Panc1 (cell line): ENCODE measurements at regions of chr14 and their contacts with region 1.

Region 1: GRCh38 chr14:76432827-76433752 is 57.2 kb downstream of the ESRRB start:
- DNase-seq: no peak
- ATAC-seq: no peak
- H3K4me3 ChIP-seq: no peak overlapping the region
- H3K27ac ChIP-seq: no peak overlapping the region
- H3K4me1 ChIP-seq: no peaks in the 10 kb centered on the region
- H3K27me3 ChIP-seq: no peaks in the 10 kb centered on the region; the same call in 1 of the 2 replicates
- CTCF ChIP-seq: no peak

Region 2: DNA sequence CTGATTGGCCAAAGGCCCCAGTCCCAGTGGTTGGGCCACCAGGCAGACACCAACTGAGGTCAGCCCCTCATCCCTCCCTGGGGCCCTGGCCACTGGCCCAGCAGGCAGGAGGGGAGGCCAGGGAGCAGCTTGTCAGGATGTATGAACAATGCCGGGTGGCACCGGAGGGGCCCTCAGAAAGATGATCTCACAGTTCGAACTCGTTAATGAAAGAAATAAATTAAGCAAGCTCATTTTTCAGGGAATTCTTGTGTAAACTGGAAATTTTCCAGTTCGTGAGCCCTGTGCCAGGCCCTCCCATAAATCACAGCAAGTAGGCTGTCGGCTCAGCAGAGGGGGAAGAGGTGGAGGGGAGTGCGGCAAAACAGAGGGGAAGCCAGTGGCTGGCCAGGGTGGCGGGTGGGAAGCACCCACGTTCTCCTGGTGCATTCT is 151.2 kb after region 1 on chr14:
- CTCF ChIA-PET with region 1: no interaction called
- POLR2A ChIA-PET with region 1: interaction called, 12 read pairs
- in situ Hi-C with region 1: no loop called
- intact Hi-C with region 1: no loop called
- DNase-seq: no peak
- ATAC-seq: no peak
- H3K4me3 ChIP-seq: no peak overlapping the region
- H3K27ac ChIP-seq: no peak overlapping the region
- H3K4me1 ChIP-seq: no peaks in the 10 kb centered on the region
- H3K27me3 ChIP-seq: no peaks in the 10 kb centered on the region
- CTCF ChIP-seq: no peak

Region 3: DNA sequence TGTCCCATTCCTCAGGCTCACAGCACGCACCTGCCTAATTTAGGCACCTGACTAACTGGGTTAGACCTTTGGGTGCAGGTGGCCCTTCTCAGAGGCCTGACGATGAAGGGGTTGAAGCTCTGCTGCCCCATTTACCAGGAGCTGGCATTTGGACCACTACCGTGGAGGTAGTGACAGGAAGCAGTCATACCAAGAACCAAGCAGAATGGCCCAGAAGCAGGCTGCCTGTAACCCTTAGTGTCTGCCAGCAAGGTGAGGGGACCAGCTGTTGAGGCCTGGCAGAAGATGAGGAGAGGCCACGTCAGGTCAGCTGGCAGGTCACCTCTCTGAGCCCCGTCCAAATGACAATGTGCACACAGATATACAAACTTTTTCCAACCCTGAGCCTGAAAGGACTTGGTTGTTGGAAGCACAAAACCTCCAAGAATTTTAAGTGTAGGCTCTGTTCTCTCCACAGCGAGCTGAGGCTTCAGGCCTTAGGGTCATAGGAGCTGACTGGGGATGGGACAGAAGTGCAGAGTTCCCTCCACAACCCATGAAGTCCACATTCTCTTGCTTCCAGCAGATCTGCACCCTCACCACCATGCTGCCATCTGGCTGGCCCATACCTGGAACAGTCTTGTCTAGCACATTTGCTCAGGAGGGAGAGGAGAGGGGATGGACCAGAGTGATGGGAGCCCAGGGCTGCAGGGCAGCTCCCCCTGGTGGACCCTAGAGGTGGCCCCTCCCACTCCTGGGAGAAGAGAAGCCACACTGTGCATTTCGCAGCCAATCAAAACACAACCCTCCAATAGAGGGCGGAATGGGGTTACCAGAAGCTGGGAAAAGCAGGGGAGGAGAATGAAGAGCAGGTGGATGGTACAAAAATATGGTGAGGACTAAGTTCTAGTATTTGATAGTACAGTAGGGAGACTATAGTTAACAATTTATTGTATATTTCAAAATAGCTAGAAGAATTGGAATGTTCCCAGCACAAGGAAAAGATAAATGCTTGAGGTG is 351.5 kb after region 1 on chr14:
- CTCF ChIA-PET with region 1: no interaction called
- POLR2A ChIA-PET with region 1: no interaction called
- in situ Hi-C with region 1: no loop called
- intact Hi-C with region 1: no loop called
- DNase-seq: no peak
- ATAC-seq: peak; percentile 90
- H3K4me3 ChIP-seq: no peak overlapping the region
- H3K27ac ChIP-seq: no peak overlapping the region
- H3K4me1 ChIP-seq: no peaks in the 10 kb centered on the region
- H3K27me3 ChIP-seq: no peaks in the 10 kb centered on the region
- CTCF ChIP-seq: peak; percentile 79